ENCODE measurements at regions of chr12 and their contacts with region 1.

Region 1: GRCh38 chr12:32755654-32756475 is at the start of gene YARS2:
- DNase-seq: peak; percentile 96
- ATAC-seq: peak; percentile 96
- H3K4me3 ChIP-seq: peak within 1 kb of the TSS; percentile 86 to 95 (median 91)
- H3K27ac ChIP-seq: peak within 1 kb of the TSS; percentile 76
- H3K4me1 ChIP-seq: peaks cover 30% of the 10 kb centered on the region
- H3K27me3 ChIP-seq: peaks cover 0 to under 1% of the 10 kb centered on the region in 2 experiments; a peak in 1 of 5 replicates
- CTCF ChIP-seq: peak; percentile 93
- EP300 ChIP-seq: no peak
- POLR2A ChIP-seq: peak; percentile 91 to 98
- RAD21 ChIP-seq: peak; percentile 85
- total RNA-seq, gene YARS2: 36.0 and 39.6 TPM in 2 replicates

Region 2: DNA sequence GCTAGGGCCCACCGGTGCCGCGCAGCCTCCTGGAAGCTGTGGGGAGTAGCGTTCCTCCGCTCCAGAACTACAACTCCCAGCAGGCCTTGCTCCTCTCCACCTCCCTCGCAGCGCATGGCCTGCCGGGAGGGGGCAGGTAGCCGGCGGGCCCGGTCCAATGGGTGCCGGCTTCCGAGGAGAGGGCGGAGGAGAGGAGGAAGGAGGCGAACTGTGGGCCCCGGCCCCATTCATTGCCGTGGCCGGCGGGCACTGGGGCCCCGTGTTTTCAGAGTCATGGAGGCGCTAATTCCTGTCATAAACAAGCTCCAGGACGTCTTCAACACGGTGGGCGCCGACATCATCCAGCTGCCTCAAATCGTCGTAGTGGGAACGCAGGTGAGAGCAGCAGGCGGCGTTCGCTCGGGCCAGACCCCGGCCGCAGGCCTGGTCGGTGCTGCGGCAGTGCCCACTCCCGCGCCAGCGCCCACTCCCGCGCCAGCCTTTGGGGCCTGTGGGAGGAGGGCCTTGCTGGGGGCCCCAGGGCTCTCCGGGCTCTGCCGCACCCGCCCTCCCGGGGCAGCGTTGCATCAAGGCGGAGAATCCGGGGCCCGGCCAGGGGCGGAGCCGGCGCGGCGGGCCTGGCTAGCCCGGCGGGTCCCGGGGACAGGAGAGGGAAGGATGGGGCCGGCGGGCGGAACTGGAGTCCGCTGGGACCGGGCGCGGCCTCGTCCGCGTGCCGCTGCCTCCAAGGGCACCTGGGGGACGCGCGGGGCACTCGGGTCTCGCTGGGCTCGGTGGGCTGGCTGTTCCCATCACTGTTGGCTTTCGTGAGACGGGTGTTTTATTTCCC is 76.6 kb before region 1 on chr12 and contains the start of gene DNM1L:
- CTCF ChIA-PET with region 1: no interaction called
- POLR2A ChIA-PET with region 1: interaction called, 13 read pairs
- in situ Hi-C with region 1: no loop called
- intact Hi-C with region 1: no loop called
- DNase-seq: peak; percentile 93
- ATAC-seq: peak; percentile 96
- H3K4me3 ChIP-seq: peak within 1 kb of the TSS; percentile 84 to 85 (median 84)
- H3K27ac ChIP-seq: peak within 1 kb of the TSS; percentile 92
- H3K4me1 ChIP-seq: peaks cover 64% of the 10 kb centered on the region
- H3K27me3 ChIP-seq: no peaks in the 10 kb centered on the region; a peak in 1 of 5 replicates
- CTCF ChIP-seq: 0 out of 2 replicates have a peak, but pooled peaks have one; percentile 2
- EP300 ChIP-seq: peak in 1 of 2 experiments; percentile 13; a peak in 1 of 4 replicates
- POLR2A ChIP-seq: peak; percentile 89 to 97
- RAD21 ChIP-seq: peak; percentile 33; the same call in 1 of the 2 replicates
- total RNA-seq, gene DNM1L: 65.8 and 81.5 TPM in 2 replicates

Region 3: GRCh38 chr12:32727237-32727636 is 28.6 kb before region 1 on chr12:
- CTCF ChIA-PET with region 1: no interaction called
- POLR2A ChIA-PET with region 1: no interaction called
- in situ Hi-C with region 1: no loop called
- intact Hi-C with region 1: no loop called
- DNase-seq: no peak
- ATAC-seq: 0 out of 3 replicates have a peak, but pooled peaks have one; percentile 31
- H3K4me3 ChIP-seq: no peak overlapping the region
- H3K27ac ChIP-seq: no peak overlapping the region
- H3K4me1 ChIP-seq: no peaks in the 10 kb centered on the region
- H3K27me3 ChIP-seq: no peaks in the 10 kb centered on the region
- CTCF ChIP-seq: no peak
- EP300 ChIP-seq: no peak
- POLR2A ChIP-seq: no peak
- RAD21 ChIP-seq: no peak

Region 4: GRCh38 chr12:32896432-32897273 is 140.8 kb after region 1 on chr12 and contains the start of gene PKP2:
- CTCF ChIA-PET with region 1: no interaction called
- POLR2A ChIA-PET with region 1: interaction called, 24 read pairs
- in situ Hi-C with region 1: loop called (anchors 5 kb)
- intact Hi-C with region 1: no loop called
- DNase-seq: peak; percentile 80
- ATAC-seq: peak; percentile 82
- H3K4me3 ChIP-seq: peak within 1 kb of the TSS; percentile 78 to 98 (median 93)
- H3K27ac ChIP-seq: peak within 1 kb of the TSS; percentile 80
- H3K4me1 ChIP-seq: peaks cover 65% of the 10 kb centered on the region
- H3K27me3 ChIP-seq: no peaks in the 10 kb centered on the region
- CTCF ChIP-seq: no peak; the same call in 1 of the 2 replicates
- EP300 ChIP-seq: no peak
- POLR2A ChIP-seq: peak; percentile 53 to 71
- RAD21 ChIP-seq: peak; percentile 15; the same call in 1 of the 2 replicates
- total RNA-seq, gene PKP2: 25.3 and 27.5 TPM in 2 replicates

Region 5: GRCh38 chr12:33407084-33407483 is 651.2 kb after region 1 on chr12:
- CTCF ChIA-PET with region 1: no interaction called
- POLR2A ChIA-PET with region 1: no interaction called
- in situ Hi-C with region 1: loop called (anchors 25 kb)
- intact Hi-C with region 1: loop called (anchors 10 kb)
- DNase-seq: no peak
- ATAC-seq: no peak
- H3K4me3 ChIP-seq: no peak overlapping the region
- H3K27ac ChIP-seq: no peak overlapping the region
- H3K4me1 ChIP-seq: no peaks in the 10 kb centered on the region
- H3K27me3 ChIP-seq: no peaks in the 10 kb centered on the region
- CTCF ChIP-seq: no peak
- EP300 ChIP-seq: no peak
- POLR2A ChIP-seq: no peak
- RAD21 ChIP-seq: no peak

Region 6: DNA sequence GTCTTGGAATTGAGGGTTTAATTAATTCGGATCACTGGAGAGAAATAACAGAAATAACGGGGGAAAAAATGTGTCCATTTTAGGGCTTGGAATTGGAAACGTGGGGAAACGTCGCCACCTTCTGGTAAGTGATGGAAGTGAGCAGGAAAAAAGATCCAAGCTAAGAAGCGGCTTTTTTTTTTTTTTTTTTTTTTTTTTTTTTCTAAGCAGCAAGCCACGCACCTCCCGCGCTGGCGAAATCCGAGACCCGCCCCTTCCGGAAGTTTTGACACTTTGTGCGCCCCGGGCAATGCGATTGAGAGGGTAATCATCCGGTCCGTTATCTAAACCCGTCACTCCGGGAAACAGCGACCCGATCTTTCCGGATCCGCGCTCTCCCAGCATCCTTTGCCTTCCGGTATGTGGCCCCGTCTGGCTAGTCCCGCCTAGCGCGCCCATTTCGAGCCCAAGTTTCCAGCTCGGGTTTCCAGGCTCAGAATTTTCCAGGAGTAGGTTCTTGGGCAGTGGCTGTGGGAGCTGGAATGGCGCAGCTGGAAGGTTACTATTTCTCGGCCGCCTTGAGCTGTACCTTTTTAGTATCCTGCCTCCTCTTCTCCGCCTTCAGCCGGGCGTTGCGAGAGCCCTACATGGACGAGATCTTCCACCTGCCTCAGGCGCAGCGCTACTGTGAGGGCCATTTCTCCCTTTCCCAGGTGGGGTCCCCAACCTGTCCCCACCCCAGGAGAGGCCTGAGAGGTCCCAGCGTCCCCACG is 1266.4 kb after region 1 on chr12 and contains the start of gene ALG10:
- CTCF ChIA-PET with region 1: interaction called, 14 read pairs
- POLR2A ChIA-PET with region 1: interaction called, 31 read pairs
- in situ Hi-C with region 1: loop called (anchors 5 kb)
- intact Hi-C with region 1: loop called (anchors 1 kb)
- DNase-seq: peak; percentile 95
- ATAC-seq: peak; percentile 100
- H3K4me3 ChIP-seq: peak within 1 kb of the TSS; percentile 69 to 86 (median 82)
- H3K27ac ChIP-seq: peak within 1 kb of the TSS; percentile 75
- H3K4me1 ChIP-seq: 0 out of 2 replicates have a peak, but pooled peaks cover 14% of the 10 kb centered on the region
- H3K27me3 ChIP-seq: no peaks in the 10 kb centered on the region; a peak in 1 of 5 replicates
- CTCF ChIP-seq: peak; percentile 68
- EP300 ChIP-seq: peak in 1 of 2 experiments; percentile 30; a peak in 1 of 4 replicates
- POLR2A ChIP-seq: peak; percentile 51 to 60; a peak in 2 of 4 replicates
- RAD21 ChIP-seq: peak; percentile 43
- total RNA-seq, gene ALG10: 13.1 and 17.4 TPM in 2 replicates

Measured in HepG2 (cell line).